WTC11 (cell line): ENCODE measurements at regions of chr15 and their contacts with region 1.

Region 1: DNA sequence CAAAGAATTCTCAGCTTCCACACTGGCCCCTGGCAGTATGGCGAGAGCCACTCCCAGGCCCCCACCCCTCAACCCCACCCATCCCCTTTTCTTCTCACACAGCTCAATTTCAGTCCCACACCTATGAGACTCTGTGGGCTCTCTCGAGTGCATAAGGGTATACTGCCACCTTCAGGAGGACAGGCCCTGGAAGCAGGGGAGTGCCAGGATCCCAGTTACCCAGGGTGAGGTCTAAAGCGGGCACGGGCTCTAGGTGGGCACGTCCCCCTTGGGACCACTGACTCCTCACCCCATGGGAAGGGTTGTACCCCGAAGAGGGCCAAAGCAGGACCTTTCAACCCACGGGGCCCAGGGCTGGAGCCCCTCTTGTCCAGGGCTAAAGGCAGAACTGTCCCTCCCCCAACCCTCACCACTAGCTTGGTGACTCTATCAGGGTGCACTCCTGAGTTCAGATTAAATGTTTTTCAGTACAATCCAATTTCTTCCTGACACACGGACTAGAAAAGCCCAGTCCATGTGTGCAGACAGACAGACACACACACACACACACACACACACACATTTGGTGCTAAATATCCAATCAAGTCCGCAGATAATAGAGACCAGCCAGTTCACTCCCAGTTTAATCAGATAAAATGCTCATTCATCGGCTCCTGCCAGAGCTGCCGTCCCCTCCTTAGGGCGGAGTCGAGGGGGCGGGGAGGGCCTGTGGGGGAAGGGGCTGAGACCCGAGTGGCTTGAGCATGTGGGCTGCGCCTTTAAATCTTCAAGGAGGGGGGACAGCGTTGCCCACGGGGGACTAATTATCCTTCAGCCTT is 59.4 kb downstream of the CYP11A1 start:
- DNase-seq: peak; percentile 63
- ATAC-seq: peak; percentile 66
- H3K4me3 Mint-ChIP-seq: peak overlapping the region; percentile 31
- H3K27ac Mint-ChIP-seq: no peak overlapping the region
- H3K4me1 Mint-ChIP-seq: peaks cover 71% of the 10 kb centered on the region
- H3K27me3 Mint-ChIP-seq: peaks cover 32% of the 10 kb centered on the region
- CTCF ChIP-seq: peak; percentile 16; the same call in 1 of the 2 replicates

Region 2: DNA sequence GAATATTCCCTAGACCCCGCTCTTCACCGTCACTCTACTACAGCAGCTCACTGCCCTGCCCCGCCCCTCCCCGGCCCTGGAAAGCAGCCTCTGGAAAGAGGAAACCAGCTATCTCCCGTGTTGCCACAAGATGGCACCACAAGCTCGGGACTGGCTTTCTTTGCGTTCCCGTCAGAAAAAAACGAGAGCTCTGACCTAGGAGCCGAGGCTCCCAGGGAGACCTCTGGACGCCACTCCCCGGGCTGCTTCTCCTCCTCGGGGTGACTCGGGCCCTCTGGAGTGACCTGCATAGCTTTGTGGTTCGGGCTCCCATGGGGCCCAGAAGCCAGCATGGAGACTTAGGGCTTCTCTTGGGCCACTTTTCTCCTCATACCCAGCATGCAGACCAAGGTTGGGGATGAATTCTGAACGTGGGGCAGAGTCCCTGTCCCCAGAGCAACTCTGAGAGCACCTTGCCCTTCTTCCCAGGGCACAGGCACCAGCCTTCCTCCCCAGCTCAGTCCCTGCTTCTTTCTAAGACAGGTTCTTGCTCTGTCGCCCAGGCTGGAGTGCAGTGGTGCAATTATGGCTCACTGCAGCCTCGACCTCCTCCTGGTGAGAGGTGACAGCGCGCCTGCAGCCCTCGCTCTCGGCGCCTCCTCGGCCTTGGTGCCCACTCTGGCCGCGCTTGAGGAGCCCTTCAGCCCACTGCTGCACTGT is 334.9 kb before region 1 on chr15:
- CTCF ChIA-PET with region 1: interaction called, 23 read pairs
- POLR2A ChIA-PET with region 1: no interaction called
- DNase-seq: peak; percentile 90
- ATAC-seq: peak; percentile 93
- H3K4me3 Mint-ChIP-seq: peak overlapping the region; percentile 48
- H3K27ac Mint-ChIP-seq: no peak overlapping the region
- H3K4me1 Mint-ChIP-seq: peaks cover 13% of the 10 kb centered on the region
- H3K27me3 Mint-ChIP-seq: peaks cover 15% of the 10 kb centered on the region
- CTCF ChIP-seq: peak; percentile 31; the same call in 1 of the 2 replicates

Region 3: DNA sequence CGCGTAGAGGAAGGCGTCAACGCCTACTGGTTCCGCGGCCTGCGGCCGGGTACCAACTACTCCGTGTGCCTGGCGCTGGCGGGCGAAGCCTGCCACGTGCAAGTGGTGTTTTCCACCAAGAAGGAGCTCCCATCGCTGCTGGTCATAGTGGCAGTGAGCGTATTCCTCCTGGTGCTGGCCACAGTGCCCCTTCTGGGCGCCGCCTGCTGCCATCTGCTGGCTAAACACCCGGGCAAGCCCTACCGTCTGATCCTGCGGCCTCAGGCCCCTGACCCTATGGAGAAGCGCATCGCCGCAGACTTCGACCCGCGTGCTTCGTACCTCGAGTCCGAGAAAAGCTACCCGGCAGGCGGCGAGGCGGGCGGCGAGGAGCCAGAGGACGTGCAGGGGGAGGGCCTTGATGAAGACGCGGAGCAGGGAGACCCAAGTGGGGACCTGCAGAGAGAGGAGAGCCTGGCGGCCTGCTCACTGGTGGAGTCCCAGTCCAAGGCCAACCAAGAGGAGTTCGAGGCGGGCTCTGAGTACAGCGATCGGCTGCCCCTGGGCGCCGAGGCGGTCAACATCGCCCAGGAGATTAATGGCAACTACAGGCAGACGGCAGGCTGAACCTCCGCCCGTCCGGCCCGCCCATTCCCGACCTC is 173.5 kb before region 1 on chr15:
- CTCF ChIA-PET with region 1: interaction called, 89 read pairs
- POLR2A ChIA-PET with region 1: interaction called, 4 read pairs
- DNase-seq: peak; percentile 84
- ATAC-seq: peak; percentile 43
- H3K4me3 Mint-ChIP-seq: peak overlapping the region; percentile 67
- H3K27ac Mint-ChIP-seq: no peak overlapping the region
- H3K4me1 Mint-ChIP-seq: peaks cover 65% of the 10 kb centered on the region
- H3K27me3 Mint-ChIP-seq: peaks cover 98% of the 10 kb centered on the region
- CTCF ChIP-seq: peak; percentile 62

Region 4: DNA sequence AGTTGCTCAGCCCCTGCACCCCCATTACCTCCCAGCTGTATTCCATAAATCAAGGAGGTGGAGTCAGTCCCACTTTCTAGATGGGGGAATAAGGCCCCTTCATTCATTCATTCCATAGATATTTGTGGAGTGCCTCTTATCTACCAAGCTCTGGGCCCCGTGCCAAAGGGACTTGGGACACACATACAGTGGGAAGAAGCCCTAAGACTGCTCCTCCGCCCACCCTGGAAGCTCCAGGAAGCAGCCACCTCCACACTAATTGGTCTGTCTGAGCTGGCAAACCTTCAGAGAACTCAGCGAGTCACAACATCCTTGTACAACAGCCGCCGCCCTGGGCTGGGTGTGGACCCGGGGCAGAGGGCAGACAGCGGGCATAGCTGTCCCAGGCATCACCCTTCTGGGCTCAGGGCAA is 111.9 kb before region 1 on chr15:
- CTCF ChIA-PET with region 1: interaction called, 78 read pairs
- POLR2A ChIA-PET with region 1: interaction called, 3 read pairs
- DNase-seq: no peak
- ATAC-seq: no peak
- H3K4me3 Mint-ChIP-seq: no peak overlapping the region
- H3K27ac Mint-ChIP-seq: no peak overlapping the region
- H3K4me1 Mint-ChIP-seq: peaks cover 17% of the 10 kb centered on the region
- H3K27me3 Mint-ChIP-seq: no peaks in the 10 kb centered on the region; the same call in 1 of the 2 replicates
- CTCF ChIP-seq: no peak

Region 5: GRCh38 chr15:74222240-74223119 is 85.6 kb before region 1 on chr15:
- CTCF ChIA-PET with region 1: interaction called, 53 read pairs
- POLR2A ChIA-PET with region 1: interaction called, 4 read pairs
- DNase-seq: no peak
- ATAC-seq: no peak
- H3K4me3 Mint-ChIP-seq: peak overlapping the region; percentile 49
- H3K27ac Mint-ChIP-seq: no peak overlapping the region
- H3K4me1 Mint-ChIP-seq: peaks cover 54% of the 10 kb centered on the region
- H3K27me3 Mint-ChIP-seq: peaks cover 90% of the 10 kb centered on the region
- CTCF ChIP-seq: no peak

Region 6: DNA sequence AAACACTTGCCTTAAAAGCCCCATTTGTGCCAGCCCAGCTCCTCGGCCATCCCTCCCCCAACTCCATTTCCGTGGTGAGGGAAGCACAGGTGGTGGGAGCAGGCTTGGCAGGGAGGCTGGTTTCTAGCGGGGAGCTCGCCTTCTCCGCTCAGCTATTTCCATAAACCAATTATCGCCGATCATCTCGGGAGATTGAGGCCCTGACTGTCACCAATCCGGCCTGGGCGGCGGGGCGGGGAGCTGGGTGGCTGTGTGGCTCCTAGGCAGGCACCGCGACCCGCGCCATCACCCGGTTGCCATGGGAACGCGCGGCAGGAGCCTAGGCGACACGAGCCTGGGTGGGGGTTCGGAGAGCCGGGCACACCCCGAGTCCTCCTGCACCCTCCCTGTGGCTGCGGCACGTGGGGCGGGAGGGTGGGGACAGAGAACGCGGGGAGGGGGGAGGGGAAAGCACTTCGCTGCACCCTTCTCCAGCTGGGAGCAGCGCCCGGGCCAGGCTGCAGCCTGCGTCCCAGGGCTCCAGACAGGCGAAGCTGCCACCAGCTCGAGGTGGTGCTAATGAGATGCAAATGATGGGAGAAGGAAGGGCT is 62.6 kb before region 1 on chr15:
- CTCF ChIA-PET with region 1: interaction called, 25 read pairs
- POLR2A ChIA-PET with region 1: no interaction called
- DNase-seq: peak; percentile 69
- ATAC-seq: peak; percentile 81
- H3K4me3 Mint-ChIP-seq: peak overlapping the region; percentile 59
- H3K27ac Mint-ChIP-seq: no peak overlapping the region
- H3K4me1 Mint-ChIP-seq: peaks cover 32% of the 10 kb centered on the region
- H3K27me3 Mint-ChIP-seq: peaks cover 28% of the 10 kb centered on the region
- CTCF ChIP-seq: no peak

Region 7: DNA sequence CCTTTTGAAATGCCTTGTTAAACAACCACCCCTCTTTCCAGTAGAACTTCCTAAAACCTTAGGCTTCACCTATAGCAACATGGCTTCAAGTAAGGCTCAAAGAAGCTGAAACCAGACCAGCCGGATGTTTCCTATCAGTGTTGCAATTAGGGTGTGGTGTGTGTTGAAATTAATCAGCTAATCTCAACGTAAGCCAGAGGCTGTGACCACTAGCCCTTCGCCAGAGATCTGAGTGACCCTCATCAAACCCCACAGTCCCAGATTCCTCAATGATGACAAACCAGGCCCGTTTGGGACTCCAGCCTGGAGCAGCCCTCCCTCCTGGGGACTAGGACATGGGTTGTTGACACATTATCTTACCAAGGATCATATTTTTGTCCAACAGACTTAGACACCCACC is 32.1 kb after region 1 on chr15:
- CTCF ChIA-PET with region 1: interaction called, 10 read pairs
- POLR2A ChIA-PET with region 1: no interaction called
- DNase-seq: peak; percentile 1
- ATAC-seq: no peak
- H3K4me3 Mint-ChIP-seq: no peak overlapping the region
- H3K27ac Mint-ChIP-seq: no peak overlapping the region
- H3K4me1 Mint-ChIP-seq: no peaks in the 10 kb centered on the region; the same call in 1 of the 2 replicates
- H3K27me3 Mint-ChIP-seq: peaks cover 3% of the 10 kb centered on the region; the same call in 1 of the 2 replicates
- CTCF ChIP-seq: no peak